GM12878 (cell line): ENCODE measurements at regions of chr11 and their contacts with region 1.

Region 1: GRCh38 chr11:121451986-121452608 is at the start of gene SORL1:
- DNase-seq: no peak
- ATAC-seq: peak; percentile 49
- H3K4me3 ChIP-seq: peak within 1 kb of the TSS; percentile 77
- H3K27ac ChIP-seq: peak within 1 kb of the TSS; percentile 76
- H3K4me1 ChIP-seq: peaks cover 49% of the 10 kb centered on the region
- H3K27me3 ChIP-seq: no peaks in the 10 kb centered on the region
- CTCF ChIP-seq: peak; percentile 48 to 73 (median 68)
- EP300 ChIP-seq: no peak
- POLR2A ChIP-seq: peak; percentile 87
- RAD21 ChIP-seq: peak; percentile 62
- polyA plus RNA-seq, gene SORL1: 20.2 to 26.0 TPM

Region 2: GRCh38 chr11:121194731-121195596 is 257.1 kb before region 1 on chr11:
- CTCF ChIA-PET with region 1: no interaction called
- POLR2A ChIA-PET with region 1: no interaction called
- RAD21 ChIA-PET with region 1: no interaction called
- SMC1A ChIA-PET with region 1: no interaction called
- in situ Hi-C with region 1: no loop called
- intact Hi-C with region 1: no loop called
- DNase-seq: peak; percentile 31
- ATAC-seq: peak; percentile 99
- H3K4me3 ChIP-seq: no peak overlapping the region
- H3K27ac ChIP-seq: no peak overlapping the region
- H3K4me1 ChIP-seq: no peaks in the 10 kb centered on the region
- H3K27me3 ChIP-seq: no peaks in the 10 kb centered on the region
- CTCF ChIP-seq: peak; percentile 72 to 84 (median 83)
- EP300 ChIP-seq: no peak
- POLR2A ChIP-seq: no peak
- RAD21 ChIP-seq: peak; percentile 86

Region 3: DNA sequence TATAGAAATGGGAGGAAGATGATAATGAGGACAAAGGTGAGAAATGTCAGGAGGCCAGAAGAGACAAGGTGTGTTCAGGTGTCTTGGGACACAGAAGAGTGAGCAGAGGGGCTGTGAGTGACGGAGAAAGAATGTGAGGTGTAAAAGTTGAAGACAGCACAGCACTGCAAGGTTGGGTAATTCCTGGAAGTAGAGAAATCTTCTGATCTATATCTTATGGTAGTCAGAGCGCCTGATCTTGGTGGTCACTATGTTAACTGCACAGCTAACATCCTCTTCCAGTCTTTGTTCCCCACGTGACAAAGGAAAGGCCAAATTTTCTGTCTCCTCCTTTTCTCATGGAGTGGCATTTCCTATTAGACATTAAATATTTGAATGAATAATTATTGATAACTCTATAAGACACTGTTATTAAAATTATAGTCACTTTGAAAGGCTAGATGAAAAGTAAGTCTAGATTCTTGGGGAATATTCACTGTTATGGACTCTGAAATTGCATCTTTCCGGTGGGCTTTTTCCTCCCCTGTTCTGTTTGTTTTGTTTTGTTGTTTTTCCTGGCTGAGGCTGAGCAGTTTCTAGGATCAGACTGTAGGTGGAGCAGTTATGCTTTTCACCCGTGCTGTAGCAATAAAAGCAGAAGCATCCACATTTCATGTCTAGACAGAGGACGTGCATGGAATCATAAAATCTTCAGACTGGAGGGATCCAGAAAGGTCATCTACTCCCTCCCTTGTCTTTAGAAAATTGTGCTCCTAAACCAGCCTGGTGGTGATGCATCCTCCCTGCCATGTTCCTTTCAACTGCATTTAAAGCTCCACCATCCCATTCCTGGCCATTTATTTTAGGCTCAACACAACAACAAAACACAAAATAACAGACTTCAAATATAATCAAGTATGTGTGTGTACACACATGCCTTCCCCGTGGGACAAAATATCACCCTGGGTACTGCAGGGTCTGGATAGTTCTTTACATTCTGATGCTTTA is 133.0 kb before region 1 on chr11:
- CTCF ChIA-PET with region 1: interaction called, 10 read pairs
- POLR2A ChIA-PET with region 1: interaction called, 3 read pairs
- RAD21 ChIA-PET with region 1: interaction called, 6 read pairs
- SMC1A ChIA-PET with region 1: interaction called, 5 read pairs
- in situ Hi-C with region 1: no loop called
- intact Hi-C with region 1: loop called (anchors 2 kb)
- DNase-seq: no peak
- ATAC-seq: peak; percentile 84
- H3K4me3 ChIP-seq: no peak overlapping the region
- H3K27ac ChIP-seq: no peak overlapping the region
- H3K4me1 ChIP-seq: peaks cover 4% of the 10 kb centered on the region; the same call in 1 of the 2 replicates
- H3K27me3 ChIP-seq: no peaks in the 10 kb centered on the region
- CTCF ChIP-seq: peak; percentile 75 to 88 (median 86)
- EP300 ChIP-seq: no peak
- POLR2A ChIP-seq: no peak
- RAD21 ChIP-seq: peak; percentile 93

Region 4: DNA sequence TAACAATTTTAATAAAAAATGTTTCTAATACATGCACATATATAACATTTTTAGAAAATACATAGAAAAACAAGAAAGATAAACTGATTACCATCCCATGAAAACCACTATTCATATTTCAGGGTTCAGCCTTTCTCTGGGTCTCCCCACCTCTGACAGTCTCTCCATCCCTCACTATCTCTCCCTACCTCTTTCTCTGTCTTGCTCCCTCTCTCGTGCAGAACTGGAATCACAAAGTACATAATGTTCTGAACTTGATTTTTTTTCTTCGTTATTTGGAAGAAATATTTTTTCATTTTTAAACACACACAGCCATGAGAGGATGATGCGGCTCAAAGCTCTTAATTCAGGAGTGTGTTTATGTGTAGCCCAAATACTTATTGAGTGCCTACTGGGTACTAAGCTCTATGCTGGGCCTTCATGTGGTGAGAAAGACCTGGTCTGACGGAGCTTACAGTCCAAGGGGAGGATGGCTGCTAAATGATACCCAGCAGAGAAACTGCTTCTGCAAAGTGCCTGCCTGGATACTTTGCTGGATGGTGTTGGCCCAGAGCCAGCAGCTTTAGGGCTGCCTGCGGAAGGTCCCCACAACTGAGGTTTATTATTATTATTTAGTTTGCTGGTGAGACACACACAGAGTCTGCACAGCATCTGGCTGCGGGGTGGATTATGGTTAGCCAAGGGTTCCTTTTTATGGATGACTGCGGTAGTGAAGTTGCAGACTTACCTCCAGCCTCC is 117.0 kb before region 1 on chr11:
- CTCF ChIA-PET with region 1: interaction called, 14 read pairs
- POLR2A ChIA-PET with region 1: interaction called, 18 read pairs
- RAD21 ChIA-PET with region 1: interaction called, 29 read pairs
- SMC1A ChIA-PET with region 1: interaction called, 55 read pairs
- in situ Hi-C with region 1: no loop called
- intact Hi-C with region 1: loop called (anchors 5 kb)
- DNase-seq: no peak
- ATAC-seq: no peak
- H3K4me3 ChIP-seq: no peak overlapping the region
- H3K27ac ChIP-seq: no peak overlapping the region
- H3K4me1 ChIP-seq: peaks cover 49% of the 10 kb centered on the region
- H3K27me3 ChIP-seq: no peaks in the 10 kb centered on the region
- CTCF ChIP-seq: peak in 1 of 3 experiments; percentile 9; a peak in 1 of 6 replicates
- EP300 ChIP-seq: no peak
- POLR2A ChIP-seq: no peak
- RAD21 ChIP-seq: no peak

Region 5: GRCh38 chr11:121417055-121417551 is 35.0 kb before region 1 on chr11:
- CTCF ChIA-PET with region 1: interaction called, 6 read pairs
- POLR2A ChIA-PET with region 1: interaction called, 5 read pairs
- RAD21 ChIA-PET with region 1: interaction called, 11 read pairs
- SMC1A ChIA-PET with region 1: interaction called, 34 read pairs
- in situ Hi-C with region 1: no loop called
- intact Hi-C with region 1: loop called (anchors 5 kb)
- DNase-seq: peak; percentile 92
- ATAC-seq: peak; percentile 87
- H3K4me3 ChIP-seq: no peak overlapping the region
- H3K27ac ChIP-seq: peak overlapping the region; percentile 9; the same call in 1 of the 2 replicates
- H3K4me1 ChIP-seq: peaks cover 45% of the 10 kb centered on the region
- H3K27me3 ChIP-seq: no peaks in the 10 kb centered on the region
- CTCF ChIP-seq: no peak
- EP300 ChIP-seq: peak; percentile 26 to 71; a peak in 2 of 4 replicates
- POLR2A ChIP-seq: no peak
- RAD21 ChIP-seq: no peak

Region 6: DNA sequence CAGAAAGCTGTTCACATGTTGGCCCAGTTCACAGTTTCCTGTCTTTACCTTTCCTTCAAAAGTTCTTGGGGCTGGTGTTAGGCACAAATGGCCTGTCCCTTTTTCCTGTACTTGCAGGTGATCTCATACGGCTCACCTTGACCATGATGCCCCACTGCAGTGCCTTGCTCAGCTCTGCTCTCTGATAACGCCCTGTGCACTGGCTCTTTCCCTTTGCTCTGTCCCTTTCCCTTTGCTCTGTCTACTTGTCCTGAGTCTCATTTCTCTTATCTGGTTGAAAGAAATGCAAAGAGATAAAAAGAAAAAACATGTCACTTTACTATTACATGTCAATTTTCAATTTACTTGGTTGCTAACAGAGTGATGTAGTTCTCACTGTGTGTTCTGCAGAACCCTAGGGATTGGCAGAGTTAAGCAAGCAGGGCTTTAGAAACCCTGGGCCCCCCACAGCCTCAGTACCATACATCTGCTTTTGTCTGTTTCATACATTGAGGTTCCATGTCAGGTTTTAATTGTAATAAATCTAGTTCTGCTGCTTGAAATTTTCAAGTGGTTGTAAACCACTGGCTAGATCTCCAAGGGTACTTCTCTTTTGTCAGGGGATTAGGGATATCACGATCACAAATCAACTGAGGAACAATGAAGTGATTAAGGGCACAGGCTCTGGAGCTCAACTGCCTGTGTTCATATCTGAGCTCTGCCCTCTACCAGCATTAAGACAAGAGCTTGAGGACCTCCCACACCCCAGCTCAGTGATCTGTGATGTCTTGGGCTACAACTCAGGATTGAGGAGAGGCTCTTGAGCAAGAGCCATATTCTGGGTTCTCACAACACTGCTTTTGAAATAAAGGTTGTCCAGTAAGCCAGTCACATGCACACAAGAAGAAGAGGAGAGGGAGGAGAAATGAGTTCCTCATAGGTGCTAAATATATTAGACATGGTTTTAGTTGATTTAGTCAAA is 16.3 kb before region 1 on chr11:
- CTCF ChIA-PET with region 1: interaction called, 10 read pairs
- POLR2A ChIA-PET with region 1: interaction called, 16 read pairs
- RAD21 ChIA-PET with region 1: interaction called, 50 read pairs
- SMC1A ChIA-PET with region 1: interaction called, 266 read pairs
- in situ Hi-C with region 1: no loop called
- intact Hi-C with region 1: no loop called
- DNase-seq: no peak
- ATAC-seq: no peak
- H3K4me3 ChIP-seq: no peak overlapping the region
- H3K27ac ChIP-seq: no peak overlapping the region
- H3K4me1 ChIP-seq: peaks cover 12% of the 10 kb centered on the region
- H3K27me3 ChIP-seq: no peaks in the 10 kb centered on the region
- CTCF ChIP-seq: no peak
- EP300 ChIP-seq: no peak
- POLR2A ChIP-seq: no peak
- RAD21 ChIP-seq: no peak

Region 7: GRCh38 chr11:121482231-121483129 is 30.4 kb after region 1 on chr11:
- CTCF ChIA-PET with region 1: interaction called, 5 read pairs
- POLR2A ChIA-PET with region 1: interaction called, 4 read pairs
- RAD21 ChIA-PET with region 1: interaction called, 6 read pairs
- SMC1A ChIA-PET with region 1: interaction called, 8 read pairs
- in situ Hi-C with region 1: no loop called
- intact Hi-C with region 1: loop called (anchors 2 kb)
- DNase-seq: peak; percentile 93
- ATAC-seq: peak; percentile 93
- H3K4me3 ChIP-seq: peak overlapping the region; percentile 36
- H3K27ac ChIP-seq: peak overlapping the region; percentile 77
- H3K4me1 ChIP-seq: peaks cover 37% of the 10 kb centered on the region
- H3K27me3 ChIP-seq: no peaks in the 10 kb centered on the region
- CTCF ChIP-seq: no peak
- EP300 ChIP-seq: peak in 1 of 2 experiments; percentile 40; a peak in 1 of 4 replicates
- POLR2A ChIP-seq: no peak
- RAD21 ChIP-seq: no peak

Region 8: GRCh38 chr11:121575250-121575962 is 123.3 kb after region 1 on chr11:
- CTCF ChIA-PET with region 1: interaction called, 7 read pairs
- POLR2A ChIA-PET with region 1: interaction called, 4 read pairs
- RAD21 ChIA-PET with region 1: interaction called, 13 read pairs
- SMC1A ChIA-PET with region 1: interaction called, 13 read pairs
- in situ Hi-C with region 1: no loop called
- intact Hi-C with region 1: no loop called
- DNase-seq: peak; percentile 74
- ATAC-seq: peak; percentile 93
- H3K4me3 ChIP-seq: no peak overlapping the region
- H3K27ac ChIP-seq: peak overlapping the region; percentile 75
- H3K4me1 ChIP-seq: peaks cover 56% of the 10 kb centered on the region
- H3K27me3 ChIP-seq: no peaks in the 10 kb centered on the region
- CTCF ChIP-seq: no peak
- EP300 ChIP-seq: peak; percentile 86 to 91
- POLR2A ChIP-seq: no peak; the same call in 1 of the 2 replicates
- RAD21 ChIP-seq: no peak

Region 9: DNA sequence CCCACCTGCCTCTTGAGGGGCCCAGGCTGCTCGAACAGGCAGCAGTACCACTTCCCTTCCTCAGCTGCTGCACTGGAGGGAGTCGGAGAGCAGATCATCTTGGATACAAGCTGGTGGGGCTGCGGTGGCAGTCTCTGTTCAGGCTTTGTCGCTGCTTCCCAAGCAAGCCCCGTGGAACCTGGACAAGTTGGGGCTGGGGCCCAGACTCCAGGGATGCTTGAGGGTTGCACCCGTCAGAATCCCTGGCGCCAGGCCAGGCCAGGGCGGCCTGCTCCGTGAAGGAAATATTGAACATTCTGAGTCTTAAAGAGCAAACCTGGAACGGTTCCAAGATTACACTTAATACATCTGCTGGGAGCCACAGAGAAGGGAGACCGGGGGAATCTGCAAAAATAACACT is 310.7 kb after region 1 on chr11:
- CTCF ChIA-PET with region 1: no interaction called
- POLR2A ChIA-PET with region 1: no interaction called
- RAD21 ChIA-PET with region 1: no interaction called
- SMC1A ChIA-PET with region 1: no interaction called
- in situ Hi-C with region 1: no loop called
- intact Hi-C with region 1: no loop called
- DNase-seq: no peak
- ATAC-seq: no peak
- H3K4me3 ChIP-seq: no peak overlapping the region
- H3K27ac ChIP-seq: no peak overlapping the region
- H3K4me1 ChIP-seq: peaks cover 26% of the 10 kb centered on the region
- H3K27me3 ChIP-seq: no peaks in the 10 kb centered on the region; a peak in 1 of 4 replicates
- CTCF ChIP-seq: no peak
- EP300 ChIP-seq: no peak
- POLR2A ChIP-seq: no peak
- RAD21 ChIP-seq: no peak